Activated naive CD4-positive, alpha-beta T cell treated with anti-CD3 and anti-CD28 coated beads for 36 hours (primary cell): ENCODE measurements at regions of chr2 and their contacts with region 1.

Region 1: GRCh38 chr2:25521665-25522387 is 151.6 kb downstream of the DTNB start:
- DNase-seq: peak; percentile 53
- H3K4me3 Mint-ChIP-seq: peak overlapping the region; percentile 11
- H3K27ac Mint-ChIP-seq: peak overlapping the region; percentile 64
- H3K4me1 Mint-ChIP-seq: peaks cover 8% of the 10 kb centered on the region
- H3K27me3 Mint-ChIP-seq: no peaks in the 10 kb centered on the region

Region 2: GRCh38 chr2:25165992-25166875 is 355.6 kb before region 1 on chr2:
- CTCF ChIA-PET with region 1: interaction called, 3 read pairs
- intact Hi-C with region 1: loop called (anchors 1 kb)
- DNase-seq: peak; percentile 73
- H3K4me3 Mint-ChIP-seq: no peak overlapping the region
- H3K27ac Mint-ChIP-seq: no peak overlapping the region
- H3K4me1 Mint-ChIP-seq: peaks cover 21% of the 10 kb centered on the region
- H3K27me3 Mint-ChIP-seq: peaks cover 30% of the 10 kb centered on the region

Region 3: DNA sequence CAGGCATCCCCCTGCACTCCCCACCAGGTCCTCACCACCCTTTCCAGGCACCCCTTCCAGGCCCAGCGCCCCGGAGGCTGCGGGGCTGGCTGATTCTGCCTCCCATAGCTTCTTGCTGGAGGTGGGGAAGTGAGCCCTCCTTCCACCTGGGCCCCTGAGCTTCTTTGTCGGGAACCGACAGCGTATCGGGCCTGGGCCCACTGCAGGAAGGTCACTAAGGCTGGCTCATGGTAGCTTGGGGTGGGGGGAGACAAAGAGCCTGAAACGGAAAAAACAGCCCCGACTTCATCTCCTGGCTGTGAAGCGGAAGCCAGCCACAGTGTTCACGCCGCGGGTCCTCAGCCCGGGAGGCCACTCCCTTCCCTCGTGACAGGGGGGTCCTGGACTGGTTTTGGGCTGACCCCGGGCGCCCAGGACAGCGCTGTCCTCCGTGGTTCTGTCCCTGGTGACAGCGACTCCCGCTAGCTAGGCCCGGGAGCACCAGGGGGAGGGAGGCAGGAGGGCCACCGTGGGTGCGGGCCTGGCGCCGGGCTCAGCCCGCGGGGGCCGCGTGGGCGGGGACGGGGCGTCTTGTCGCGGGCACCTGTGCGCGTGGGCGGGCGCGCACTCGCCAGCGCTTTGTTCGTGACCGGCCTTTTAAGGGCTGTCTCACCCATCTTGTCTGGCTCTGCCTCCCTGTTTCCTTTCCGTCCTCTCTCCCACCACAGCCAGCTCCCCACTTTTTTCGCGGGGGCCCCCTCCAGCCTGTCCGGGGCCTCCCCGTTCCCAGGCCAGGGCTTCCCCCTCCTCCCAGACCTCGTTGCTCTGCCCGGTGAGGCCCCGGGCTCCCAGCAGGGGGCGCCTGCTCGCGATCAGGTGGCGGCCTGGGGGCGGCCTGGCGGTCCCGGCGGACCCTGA is 245.0 kb before region 1 on chr2:
- CTCF ChIA-PET with region 1: interaction called, 3 read pairs
- intact Hi-C with region 1: loop called (anchors 1 kb)
- DNase-seq: peak; percentile 88
- H3K4me3 Mint-ChIP-seq: peak overlapping the region; percentile 55
- H3K27ac Mint-ChIP-seq: peak overlapping the region; percentile 94
- H3K4me1 Mint-ChIP-seq: peaks cover 83% of the 10 kb centered on the region
- H3K27me3 Mint-ChIP-seq: no peaks in the 10 kb centered on the region

Region 4: DNA sequence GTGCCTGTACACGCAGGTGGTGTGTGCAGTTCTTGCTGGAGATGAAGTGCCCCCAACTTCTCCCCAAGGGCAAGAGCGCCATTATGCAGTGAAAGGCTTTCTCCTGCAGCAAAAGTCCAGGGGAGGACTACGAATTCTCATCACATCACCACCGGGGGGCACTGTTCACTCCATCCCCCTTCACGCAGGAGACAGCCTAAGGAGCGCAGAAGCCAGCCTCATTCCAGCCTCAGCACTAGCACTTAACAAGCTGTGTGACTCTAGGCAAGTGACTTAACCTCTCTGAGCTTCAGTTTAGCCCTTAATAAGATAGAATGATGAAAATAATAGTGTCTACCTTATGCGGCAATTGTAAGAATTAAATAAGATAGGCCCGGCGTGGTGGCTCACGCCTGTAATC is 212.4 kb before region 1 on chr2:
- CTCF ChIA-PET with region 1: interaction called, 7 read pairs
- intact Hi-C with region 1: loop called (anchors 1 kb)
- DNase-seq: peak; percentile 81
- H3K4me3 Mint-ChIP-seq: no peak overlapping the region
- H3K27ac Mint-ChIP-seq: peak overlapping the region; percentile 44
- H3K4me1 Mint-ChIP-seq: peaks cover 82% of the 10 kb centered on the region
- H3K27me3 Mint-ChIP-seq: no peaks in the 10 kb centered on the region

Region 5: DNA sequence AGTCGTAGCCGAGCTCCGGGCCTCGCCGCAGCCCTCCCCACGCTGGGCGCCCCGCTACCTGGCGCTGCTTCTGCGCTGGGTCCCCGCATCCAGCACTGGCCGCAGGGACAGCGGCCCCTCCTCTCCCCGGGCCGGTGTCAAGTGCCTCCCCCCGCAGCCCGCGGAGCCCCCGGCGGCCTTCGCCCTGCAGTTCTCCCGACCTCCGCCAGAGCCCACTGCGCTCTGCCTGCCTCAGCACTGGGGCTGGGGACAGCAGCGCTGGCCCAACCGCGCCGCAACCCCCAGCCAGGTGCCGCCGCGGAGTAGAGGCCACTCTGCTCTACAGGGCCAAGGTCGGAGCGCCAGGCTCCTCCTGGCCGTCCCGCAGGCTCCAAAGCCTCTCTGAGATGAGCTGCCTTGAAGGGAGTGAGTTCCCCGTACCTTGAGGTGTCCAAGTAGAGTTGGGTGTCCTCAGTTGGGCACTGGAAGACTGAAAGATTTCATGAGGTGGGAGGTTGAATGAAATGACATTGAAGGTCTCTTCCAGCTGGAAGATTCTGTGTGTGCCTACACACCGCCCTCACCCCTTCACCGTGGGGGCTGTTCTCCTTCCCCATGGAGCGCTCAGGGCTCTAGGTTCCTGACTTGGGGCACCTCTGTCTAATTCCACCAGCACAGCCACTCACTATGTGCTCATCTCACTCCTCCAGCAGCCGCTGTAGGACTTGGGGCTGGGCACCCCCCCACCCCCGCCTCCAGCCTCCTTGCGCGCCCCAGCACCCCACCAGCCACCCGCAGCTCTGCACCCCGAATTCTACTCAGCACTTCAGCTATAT is 179.2 kb before region 1 on chr2:
- CTCF ChIA-PET with region 1: interaction called, 3 read pairs
- intact Hi-C with region 1: loop called (anchors 1 kb)
- DNase-seq: peak; percentile 82
- H3K4me3 Mint-ChIP-seq: peak overlapping the region; percentile 80
- H3K27ac Mint-ChIP-seq: peak overlapping the region; percentile 71
- H3K4me1 Mint-ChIP-seq: peaks cover 37% of the 10 kb centered on the region
- H3K27me3 Mint-ChIP-seq: no peaks in the 10 kb centered on the region

Region 6: GRCh38 chr2:25362049-25362433 is 159.8 kb before region 1 on chr2:
- CTCF ChIA-PET with region 1: interaction called, 11 read pairs
- intact Hi-C with region 1: loop called (anchors 1 kb)
- DNase-seq: peak; percentile 98
- H3K4me3 Mint-ChIP-seq: peak overlapping the region; percentile 82
- H3K27ac Mint-ChIP-seq: peak overlapping the region; percentile 94
- H3K4me1 Mint-ChIP-seq: peaks cover 11% of the 10 kb centered on the region
- H3K27me3 Mint-ChIP-seq: no peaks in the 10 kb centered on the region

Region 7: GRCh38 chr2:25558262-25558661 is 36.4 kb after region 1 on chr2:
- CTCF ChIA-PET with region 1: no interaction called
- intact Hi-C with region 1: loop called (anchors 1 kb)
- DNase-seq: peak; percentile 58
- H3K4me3 Mint-ChIP-seq: no peak overlapping the region
- H3K27ac Mint-ChIP-seq: peak overlapping the region; percentile 35
- H3K4me1 Mint-ChIP-seq: peaks cover 52% of the 10 kb centered on the region
- H3K27me3 Mint-ChIP-seq: no peaks in the 10 kb centered on the region